ENCODE measurements at regions of chr10 and their contacts with region 1.

Region 1: DNA sequence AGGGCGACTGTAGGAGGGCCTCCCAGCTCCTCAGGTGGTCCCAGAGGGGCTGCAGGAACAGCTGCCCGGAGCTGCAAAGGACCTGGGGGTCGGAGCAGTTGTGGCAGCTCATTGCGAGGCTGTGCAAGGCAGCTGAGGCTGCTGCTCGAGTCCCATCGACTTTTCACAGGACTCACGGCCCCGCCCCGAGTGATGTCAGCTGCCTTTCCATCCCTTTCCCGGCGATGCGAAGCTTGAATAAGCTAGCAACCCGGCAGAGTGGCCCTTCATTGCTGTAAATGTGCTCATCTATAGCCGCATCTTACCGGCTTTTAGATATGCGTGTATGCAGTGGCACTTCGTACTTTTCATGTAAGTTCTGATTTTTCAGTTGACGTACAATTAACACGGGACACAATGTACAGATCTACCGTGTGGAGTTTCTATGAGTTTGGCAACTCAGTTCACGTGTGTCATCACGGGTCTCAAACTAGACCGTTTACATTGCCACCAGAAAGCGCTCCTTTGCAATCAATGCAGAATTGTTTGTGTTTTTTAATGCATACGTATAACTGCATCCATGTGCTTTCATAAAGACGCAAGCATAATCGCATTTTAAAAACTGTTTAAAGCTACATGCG is at the start of gene CH25H:
- DNase-seq: peak; percentile 85 to 92
- ATAC-seq: peak; percentile 86
- H3K4me3 ChIP-seq: peak within 1 kb of the TSS; percentile 15 to 31
- H3K27ac ChIP-seq: no peak within 1 kb of the TSS
- H3K4me1 ChIP-seq: no peaks in the 10 kb centered on the region
- H3K27me3 ChIP-seq: peaks cover 0 to 2% of the 10 kb centered on the region in 2 donors
- total RNA-seq, gene CH25H: 1.7 to 2.4 TPM

Region 2: GRCh38 chr10:88841316-88842111 is 365.8 kb before region 1 on chr10:
- intact Hi-C with region 1: loop called (anchors 5 kb)
- DNase-seq: peak in 1 of 2 donors; percentile 45
- ATAC-seq: no peak
- H3K4me3 ChIP-seq: no peak overlapping the region
- H3K27ac ChIP-seq: no peak overlapping the region
- H3K4me1 ChIP-seq: no peaks in the 10 kb centered on the region
- H3K27me3 ChIP-seq: no peaks in the 10 kb centered on the region